BJ (cell line): ENCODE measurements at regions of chr9 and their contacts with region 1.

Region 1: GRCh38 chr9:132991351-132992300 is 13.1 kb downstream of the GFI1B start:
- DNase-seq: no peak
- H3K4me3 ChIP-seq: no peak overlapping the region
- H3K27me3 ChIP-seq: peaks cover 18% of the 10 kb centered on the region
- CTCF ChIP-seq: no peak

Region 2: DNA sequence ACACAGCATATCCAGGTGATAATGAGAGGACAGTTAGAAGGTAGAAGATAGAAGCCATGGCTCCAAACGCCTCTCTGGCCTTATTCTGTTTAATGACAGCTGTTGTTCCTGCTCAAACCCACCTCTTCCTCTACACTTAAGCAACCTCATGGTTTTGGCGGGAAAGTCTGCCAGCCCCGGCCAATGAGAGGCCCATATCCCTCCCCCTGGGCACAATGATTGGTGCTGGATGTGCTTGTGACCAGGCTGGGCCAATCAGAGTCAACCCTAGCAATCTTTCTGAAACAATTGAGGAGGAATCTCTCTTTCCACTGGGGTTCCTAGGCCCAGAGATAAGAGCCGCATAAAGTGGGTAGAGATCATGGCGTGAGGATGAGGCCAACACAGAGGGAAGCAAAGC is 17.9 kb before region 1 on chr9:
- CTCF ChIA-PET with region 1: interaction called, 11 read pairs
- POLR2A ChIA-PET with region 1: no interaction called
- DNase-seq: no peak
- H3K4me3 ChIP-seq: no peak overlapping the region
- H3K27me3 ChIP-seq: peaks cover 17% of the 10 kb centered on the region
- CTCF ChIP-seq: no peak